PC-9 (cell line): ENCODE measurements at regions of chr6 and their contacts with region 1.

Region 1: DNA sequence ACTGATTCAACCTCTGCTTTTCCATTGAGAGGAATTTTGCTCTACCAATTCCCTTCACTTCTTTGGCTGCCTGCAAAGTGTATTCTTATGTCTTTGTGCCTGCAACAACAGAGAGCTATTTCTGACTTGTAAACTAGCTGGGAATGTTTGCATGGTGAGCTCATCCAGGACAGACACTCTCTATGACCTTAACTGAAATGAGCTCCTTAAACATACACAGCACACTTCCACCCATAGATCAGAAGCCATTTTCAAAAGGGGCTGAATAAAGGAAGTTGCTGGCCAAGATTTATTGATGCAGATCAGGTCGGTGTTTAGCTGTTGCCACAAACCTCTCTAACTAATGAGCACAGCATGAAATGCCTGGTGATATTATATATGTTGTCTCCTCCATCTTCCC is 377.7 kb downstream of the BTBD9 start:
- DNase-seq: peak; percentile 5 to 79
- H3K4me3 ChIP-seq: no peak overlapping the region; the same call in 1 of the 2 replicates
- H3K27ac ChIP-seq: peak overlapping the region; percentile 52
- H3K4me1 ChIP-seq: peaks cover 47% of the 10 kb centered on the region
- H3K27me3 ChIP-seq: no peaks in the 10 kb centered on the region
- CTCF ChIP-seq: no peak

Region 2: GRCh38 chr6:36755435-36756348 is 1506.3 kb before region 1 on chr6:
- CTCF ChIA-PET with region 1: no interaction called
- POLR2A ChIA-PET with region 1: no interaction called
- intact Hi-C with region 1: no loop called
- DNase-seq: peak in 1 of 2 experiments; percentile 77
- H3K4me3 ChIP-seq: no peak overlapping the region
- H3K27ac ChIP-seq: no peak overlapping the region
- H3K4me1 ChIP-seq: peaks cover 57% of the 10 kb centered on the region
- H3K27me3 ChIP-seq: no peaks in the 10 kb centered on the region
- CTCF ChIP-seq: no peak

Region 3: DNA sequence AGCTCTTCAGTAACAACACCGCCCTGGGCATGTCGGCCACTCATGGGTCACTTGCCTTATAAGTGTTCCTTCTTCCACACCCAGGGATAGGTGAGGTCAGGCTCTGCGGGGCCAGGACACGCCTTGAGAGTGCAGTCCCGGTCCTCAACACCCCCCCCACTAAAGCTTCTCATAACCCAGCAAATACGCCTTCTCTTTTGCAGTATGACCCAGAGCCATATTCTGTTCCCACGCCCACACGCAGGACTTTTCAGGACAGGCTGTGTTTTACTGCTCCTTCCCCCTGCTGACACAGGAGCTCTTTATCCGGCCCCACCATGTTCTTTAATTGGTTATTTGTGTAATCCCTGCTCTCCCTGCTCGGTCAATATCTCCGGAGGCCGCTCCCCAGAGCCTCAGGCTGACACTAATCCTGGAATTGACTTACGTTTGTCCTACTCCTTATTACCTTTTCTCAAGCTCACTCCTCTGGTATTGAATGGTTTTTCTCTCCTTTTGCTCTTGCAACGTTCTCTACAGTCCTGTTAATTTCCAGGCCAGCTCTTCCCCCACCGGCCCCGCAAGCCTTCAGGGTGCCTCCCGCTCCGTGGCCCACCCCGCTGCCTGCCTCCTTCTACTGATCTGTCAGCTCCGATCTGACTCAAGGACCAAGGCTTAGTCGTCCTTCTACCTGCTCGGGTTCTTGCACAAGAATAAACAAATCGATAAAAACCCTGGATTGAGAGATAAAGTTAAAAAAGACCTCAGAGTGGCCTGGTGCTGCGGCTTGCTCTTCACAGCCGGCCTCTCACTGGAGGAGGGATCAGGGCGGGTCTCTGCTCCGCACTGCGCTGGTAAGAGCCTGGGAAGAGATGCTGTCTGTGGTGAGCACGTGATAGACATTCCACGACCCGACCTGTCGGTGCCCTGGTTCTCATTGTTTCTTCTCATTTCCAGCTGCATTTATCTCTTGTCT is 85.0 kb before region 1 on chr6:
- CTCF ChIA-PET with region 1: no interaction called
- POLR2A ChIA-PET with region 1: interaction called, 28 read pairs
- intact Hi-C with region 1: no loop called
- DNase-seq: no peak
- H3K4me3 ChIP-seq: no peak overlapping the region
- H3K27ac ChIP-seq: no peak overlapping the region
- H3K4me1 ChIP-seq: no peaks in the 10 kb centered on the region
- H3K27me3 ChIP-seq: no peaks in the 10 kb centered on the region
- CTCF ChIP-seq: no peak